CD8-positive, alpha-beta T cell (primary cell): ENCODE measurements at regions of chr17 and their contacts with region 1.

Region 1: GRCh38 chr17:80791758-80792284 is 199.8 kb upstream of the CHMP6 start:
- DNase-seq: peak in 4 of 9 experiments; percentile 24 to 49 (median 38)
- ATAC-seq: peak; percentile 29
- H3K4me3 ChIP-seq: peak overlapping the region in 1 of 2 experiments; percentile 14
- H3K4me3 Mint-ChIP-seq: peak overlapping the region; percentile 78
- H3K27ac ChIP-seq: peak overlapping the region; percentile 13 to 74
- H3K27ac Mint-ChIP-seq: peak overlapping the region; percentile 97
- H3K4me1 ChIP-seq: peaks cover 62% of the 10 kb centered on the region
- H3K4me1 Mint-ChIP-seq: peaks cover 72% of the 10 kb centered on the region
- H3K27me3 ChIP-seq: no peaks in the 10 kb centered on the region
- H3K27me3 Mint-ChIP-seq: no peaks in the 10 kb centered on the region
- CTCF ChIP-seq: no peak

Region 2: GRCh38 chr17:80737106-80738019 is 54.5 kb before region 1 on chr17:
- CTCF ChIA-PET with region 1: no interaction called
- POLR2A ChIA-PET with region 1: interaction called, 3 read pairs
- intact Hi-C with region 1: loop called in 1 of 2 experiments (anchors 5 kb)
- DNase-seq: no peak
- ATAC-seq: no peak
- H3K4me3 ChIP-seq: no peak overlapping the region
- H3K4me3 Mint-ChIP-seq: no peak overlapping the region
- H3K27ac ChIP-seq: no peak overlapping the region
- H3K27ac Mint-ChIP-seq: peak overlapping the region; percentile 95
- H3K4me1 ChIP-seq: peaks cover 48% of the 10 kb centered on the region
- H3K4me1 Mint-ChIP-seq: peaks cover 59% of the 10 kb centered on the region
- H3K27me3 ChIP-seq: no peaks in the 10 kb centered on the region
- H3K27me3 Mint-ChIP-seq: no peaks in the 10 kb centered on the region
- CTCF ChIP-seq: no peak

Region 3: DNA sequence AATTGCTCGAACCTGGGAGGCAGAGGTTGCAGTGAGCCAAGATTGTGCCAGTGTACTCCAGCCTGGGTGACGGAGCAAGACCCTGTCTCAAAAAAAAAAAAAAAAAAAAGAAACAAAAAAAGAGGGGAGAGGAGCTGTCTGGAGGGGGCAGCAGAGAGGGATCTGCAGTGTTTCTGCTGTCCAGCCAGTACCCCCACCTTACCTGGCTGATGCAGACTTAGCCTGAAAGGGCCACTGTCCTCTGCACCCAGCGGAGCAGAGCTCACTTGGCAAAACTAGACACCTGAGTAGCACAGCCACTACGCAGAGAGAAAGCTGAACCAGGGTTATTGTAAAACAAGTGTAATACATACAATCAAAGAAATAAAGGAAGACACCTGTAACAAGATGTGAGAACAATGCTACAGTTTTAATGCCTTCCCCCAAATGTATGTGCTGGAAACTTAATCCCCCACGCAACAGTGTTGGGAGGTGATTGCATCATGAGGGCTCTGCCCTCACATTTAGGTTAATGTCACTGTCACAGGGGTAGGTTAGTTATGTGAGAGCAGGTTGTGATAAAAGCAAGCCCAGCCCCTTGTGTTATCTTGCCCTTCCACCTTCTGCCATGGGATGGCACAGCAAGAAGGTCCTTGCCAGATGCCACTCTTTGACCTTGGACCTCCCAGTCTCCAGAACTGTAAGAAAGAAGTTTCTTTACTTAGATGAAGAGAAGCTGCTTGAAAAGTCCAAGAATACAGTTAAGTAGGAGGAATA is 36.0 kb before region 1 on chr17:
- CTCF ChIA-PET with region 1: no interaction called
- POLR2A ChIA-PET with region 1: interaction called, 3 read pairs
- intact Hi-C with region 1: loop called (anchors 5 kb)
- DNase-seq: no peak
- ATAC-seq: no peak
- H3K4me3 ChIP-seq: no peak overlapping the region
- H3K4me3 Mint-ChIP-seq: no peak overlapping the region
- H3K27ac ChIP-seq: no peak overlapping the region
- H3K27ac Mint-ChIP-seq: no peak overlapping the region
- H3K4me1 ChIP-seq: peaks cover 47% of the 10 kb centered on the region
- H3K4me1 Mint-ChIP-seq: peaks cover 52% of the 10 kb centered on the region
- H3K27me3 ChIP-seq: no peaks in the 10 kb centered on the region
- H3K27me3 Mint-ChIP-seq: no peaks in the 10 kb centered on the region
- CTCF ChIP-seq: no peak

Region 4: GRCh38 chr17:80773243-80773991 is 18.4 kb before region 1 on chr17:
- CTCF ChIA-PET with region 1: interaction called, 9 read pairs
- POLR2A ChIA-PET with region 1: interaction called, 13 read pairs
- intact Hi-C with region 1: loop called in 1 of 2 experiments (anchors 2 kb)
- DNase-seq: peak in 2 of 9 experiments; percentile 56 to 59
- ATAC-seq: peak; percentile 81
- H3K4me3 ChIP-seq: no peak overlapping the region
- H3K4me3 Mint-ChIP-seq: peak overlapping the region; percentile 75
- H3K27ac ChIP-seq: no peak overlapping the region
- H3K27ac Mint-ChIP-seq: peak overlapping the region; percentile 95
- H3K4me1 ChIP-seq: peaks cover 31% of the 10 kb centered on the region
- H3K4me1 Mint-ChIP-seq: peaks cover 61% of the 10 kb centered on the region
- H3K27me3 ChIP-seq: no peaks in the 10 kb centered on the region
- H3K27me3 Mint-ChIP-seq: no peaks in the 10 kb centered on the region
- CTCF ChIP-seq: no peak

Region 5: DNA sequence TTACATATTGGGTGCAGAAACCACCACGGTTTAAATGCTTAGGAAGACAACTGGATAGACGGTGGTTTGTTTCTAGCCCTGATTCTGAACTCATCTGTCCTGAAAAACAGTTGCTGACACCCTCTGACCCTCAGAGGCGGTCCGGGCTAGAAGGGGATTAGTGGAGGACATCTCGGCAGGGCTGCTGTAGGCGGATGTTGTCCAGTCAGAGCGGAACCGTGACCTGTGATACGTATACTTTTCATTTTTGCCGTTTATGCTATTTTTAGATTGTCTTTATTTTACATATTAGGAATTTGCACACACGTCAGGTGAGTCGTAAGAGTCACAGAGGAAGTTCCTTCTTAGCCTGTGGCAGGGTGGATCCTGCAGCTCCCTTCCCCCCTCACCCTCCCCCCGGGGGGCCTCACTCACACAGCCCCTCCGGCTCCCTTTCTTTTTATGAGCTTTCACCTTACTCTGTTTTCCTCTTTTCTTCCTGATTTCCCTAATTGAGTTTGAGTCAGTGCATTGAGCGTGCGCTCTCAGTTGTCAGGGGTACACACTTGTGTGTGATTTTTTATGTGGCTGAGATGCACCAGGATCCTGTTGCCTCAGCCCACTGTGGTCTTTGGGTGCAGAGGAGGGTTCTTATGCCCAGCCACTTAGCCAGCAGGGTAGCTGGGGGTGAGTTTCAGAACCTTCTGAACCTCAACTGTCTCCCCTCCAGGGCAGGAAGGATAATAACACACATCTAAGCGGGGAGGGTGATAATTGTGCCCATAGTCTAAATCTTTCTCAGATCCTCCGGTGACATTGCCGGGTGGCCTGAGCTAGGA is 11.2 kb before region 1 on chr17:
- CTCF ChIA-PET with region 1: interaction called, 6 read pairs
- POLR2A ChIA-PET with region 1: interaction called, 17 read pairs
- intact Hi-C with region 1: loop called in 1 of 2 experiments (anchors 2 kb)
- DNase-seq: peak in 5 of 9 experiments; percentile 27 to 65 (median 36)
- ATAC-seq: peak; percentile 58
- H3K4me3 ChIP-seq: peak overlapping the region; percentile 23 to 31
- H3K4me3 Mint-ChIP-seq: peak overlapping the region; percentile 79
- H3K27ac ChIP-seq: peak overlapping the region; percentile 13 to 83
- H3K27ac Mint-ChIP-seq: peak overlapping the region; percentile 91
- H3K4me1 ChIP-seq: peaks cover 56% of the 10 kb centered on the region
- H3K4me1 Mint-ChIP-seq: peaks cover 64% of the 10 kb centered on the region
- H3K27me3 ChIP-seq: no peaks in the 10 kb centered on the region
- H3K27me3 Mint-ChIP-seq: no peaks in the 10 kb centered on the region
- CTCF ChIP-seq: no peak